PC-9 (cell line): ENCODE measurements at regions of chr22 and their contacts with region 1.

Region 1: GRCh38 chr22:27987557-27987956 is 68.5 kb upstream of the PITPNB start:
- DNase-seq: peak in 1 of 2 experiments; percentile 27
- H3K4me3 ChIP-seq: no peak overlapping the region
- H3K27ac ChIP-seq: no peak overlapping the region
- H3K4me1 ChIP-seq: no peaks in the 10 kb centered on the region
- H3K27me3 ChIP-seq: no peaks in the 10 kb centered on the region
- CTCF ChIP-seq: no peak

Region 2: DNA sequence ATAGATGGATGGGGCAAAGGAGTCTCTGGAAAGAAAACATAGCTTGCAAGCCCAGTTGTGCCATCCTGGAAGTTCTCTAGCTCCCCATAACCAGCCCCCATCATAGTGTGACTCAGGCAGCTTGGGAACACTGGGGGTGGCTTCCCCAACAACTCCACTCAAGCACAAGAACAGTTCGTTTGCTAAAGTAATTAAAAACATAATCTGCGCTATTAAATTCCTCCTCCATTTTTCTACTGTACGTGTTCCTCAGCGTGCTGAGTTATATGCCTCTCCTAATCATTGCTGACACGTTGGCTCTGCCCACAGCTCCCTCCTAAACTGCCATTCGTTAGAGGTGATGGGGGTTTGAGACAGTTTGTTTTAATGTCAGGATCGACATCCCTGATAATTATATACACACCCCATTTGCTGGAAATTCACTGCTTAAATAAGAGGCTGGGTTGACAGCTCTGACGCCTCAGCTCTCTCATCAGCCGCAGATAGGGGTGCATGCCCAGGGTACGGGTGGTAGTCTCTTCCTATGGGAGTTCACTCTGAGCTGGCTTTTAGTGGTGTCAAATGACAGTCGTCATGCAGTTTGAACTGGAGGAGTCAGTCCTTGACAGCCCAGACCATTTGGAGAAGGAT is 1877.8 kb before region 1 on chr22:
- CTCF ChIA-PET with region 1: interaction called, 10 read pairs
- POLR2A ChIA-PET with region 1: no interaction called
- intact Hi-C with region 1: no loop called
- DNase-seq: no peak
- H3K4me3 ChIP-seq: no peak overlapping the region
- H3K27ac ChIP-seq: no peak overlapping the region
- H3K4me1 ChIP-seq: no peaks in the 10 kb centered on the region
- H3K27me3 ChIP-seq: peaks cover 4% of the 10 kb centered on the region; the same call in 1 of the 2 replicates
- CTCF ChIP-seq: no peak

Region 3: GRCh38 chr22:27880778-27881394 is 106.7 kb before region 1 on chr22:
- CTCF ChIA-PET with region 1: interaction called, 17 read pairs
- POLR2A ChIA-PET with region 1: no interaction called
- intact Hi-C with region 1: no loop called
- DNase-seq: peak; percentile 18 to 42
- H3K4me3 ChIP-seq: no peak overlapping the region
- H3K27ac ChIP-seq: no peak overlapping the region
- H3K4me1 ChIP-seq: no peaks in the 10 kb centered on the region; the same call in 1 of the 2 replicates
- H3K27me3 ChIP-seq: no peaks in the 10 kb centered on the region
- CTCF ChIP-seq: peak; percentile 79